GM10248 (cell line): ENCODE measurements at regions of chr3 and their contacts with region 1.

Region 1: GRCh38 chr3:89289574-89290190 is 182.3 kb downstream of the EPHA3 start:
- DNase-seq: no peak
- CTCF ChIP-seq: no peak

Region 2: DNA sequence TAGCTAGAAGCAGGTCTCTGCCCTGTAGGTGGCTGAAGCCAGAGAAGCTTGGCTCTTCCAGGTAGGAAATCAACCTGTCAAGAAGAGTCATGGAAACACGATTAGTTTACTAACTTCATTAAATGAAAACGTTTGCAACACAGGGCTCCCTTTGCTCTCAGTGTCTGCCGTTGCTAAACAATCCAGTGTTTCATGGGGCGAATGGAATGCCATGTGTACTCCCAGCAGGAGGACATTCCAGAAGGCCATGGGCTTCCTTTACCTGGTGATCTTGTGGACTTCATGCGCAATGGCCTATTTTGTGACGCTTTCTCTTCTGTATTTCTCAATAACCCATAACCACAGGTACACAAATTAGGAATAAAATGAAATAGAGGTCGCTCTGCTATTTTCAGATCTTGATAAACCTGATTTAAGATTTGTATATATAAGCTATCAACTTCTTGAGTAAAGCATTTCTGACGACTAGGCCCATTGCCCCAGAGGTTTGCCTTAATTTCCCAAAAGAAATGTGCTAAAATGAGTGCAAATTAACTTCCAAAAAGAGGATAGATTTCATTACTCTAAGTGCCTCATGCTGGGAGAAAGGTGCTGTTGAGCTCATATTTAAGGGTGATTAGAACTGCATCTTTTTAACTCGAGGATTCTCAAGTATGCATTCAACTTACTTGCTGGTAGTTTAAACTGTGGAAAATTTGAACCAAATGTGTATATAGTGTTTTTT is 11.2 kb before region 1 on chr3:
- CTCF ChIA-PET with region 1: interaction called, 11 read pairs
- POLR2A ChIA-PET with region 1: no interaction called
- DNase-seq: no peak
- CTCF ChIP-seq: no peak